Activated naive CD4-positive, alpha-beta T cell treated with anti-CD3 and anti-CD28 coated beads for 36 hours (primary cell): ENCODE measurements at regions of chr2 and their contacts with region 1.

Region 1: GRCh38 chr2:80073134-80073561 is 231.4 kb downstream of the LRRTM1 start:
- DNase-seq: peak; percentile 31
- H3K4me3 Mint-ChIP-seq: no peak overlapping the region
- H3K27ac Mint-ChIP-seq: no peak overlapping the region
- H3K4me1 Mint-ChIP-seq: no peaks in the 10 kb centered on the region
- H3K27me3 Mint-ChIP-seq: peaks cover 7% of the 10 kb centered on the region

Region 2: GRCh38 chr2:79910643-79911042 is 162.5 kb before region 1 on chr2:
- CTCF ChIA-PET with region 1: no interaction called
- intact Hi-C with region 1: no loop called
- DNase-seq: no peak
- H3K4me3 Mint-ChIP-seq: no peak overlapping the region
- H3K27ac Mint-ChIP-seq: no peak overlapping the region
- H3K4me1 Mint-ChIP-seq: no peaks in the 10 kb centered on the region
- H3K27me3 Mint-ChIP-seq: peaks cover 4% of the 10 kb centered on the region

Region 3: DNA sequence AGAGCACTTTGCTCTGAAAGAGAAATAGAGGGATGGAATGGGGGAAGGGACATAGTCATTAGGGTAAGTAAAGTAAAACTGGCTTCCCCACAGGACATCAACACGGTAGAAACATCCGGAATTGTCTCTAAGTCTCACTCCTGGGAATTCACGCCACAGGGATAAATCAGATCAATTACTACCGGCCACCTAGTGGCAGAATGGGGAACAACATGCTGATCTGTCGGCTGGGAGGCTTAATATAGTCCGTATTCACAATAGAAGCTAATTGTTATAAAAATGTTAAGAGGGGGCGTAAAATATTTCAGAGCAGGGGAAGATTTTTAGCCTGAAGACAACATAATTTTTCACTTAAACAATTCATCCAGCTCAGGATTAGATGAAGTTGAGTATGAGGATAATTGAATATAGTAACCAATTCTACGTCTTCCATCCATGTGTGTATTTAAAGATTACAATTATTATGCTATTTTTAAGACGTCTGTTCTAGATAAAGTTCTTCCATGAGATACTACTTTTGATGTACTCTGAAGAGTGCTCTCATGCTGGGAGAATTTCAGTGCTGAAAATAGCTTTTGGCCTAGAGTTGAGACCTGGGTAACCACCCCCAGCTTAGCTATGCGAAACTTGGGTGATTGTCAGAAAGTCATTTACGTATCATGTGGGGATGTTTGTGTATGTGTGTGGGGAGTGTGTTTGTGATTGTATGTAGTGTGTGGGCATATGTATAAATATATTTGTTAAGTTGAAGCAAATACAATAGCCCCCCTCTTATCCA is 165.7 kb after region 1 on chr2:
- CTCF ChIA-PET with region 1: no interaction called
- intact Hi-C with region 1: loop called (anchors 2 kb)
- DNase-seq: peak; percentile 20
- H3K4me3 Mint-ChIP-seq: no peak overlapping the region
- H3K27ac Mint-ChIP-seq: no peak overlapping the region
- H3K4me1 Mint-ChIP-seq: no peaks in the 10 kb centered on the region
- H3K27me3 Mint-ChIP-seq: peaks cover 2% of the 10 kb centered on the region

Region 4: DNA sequence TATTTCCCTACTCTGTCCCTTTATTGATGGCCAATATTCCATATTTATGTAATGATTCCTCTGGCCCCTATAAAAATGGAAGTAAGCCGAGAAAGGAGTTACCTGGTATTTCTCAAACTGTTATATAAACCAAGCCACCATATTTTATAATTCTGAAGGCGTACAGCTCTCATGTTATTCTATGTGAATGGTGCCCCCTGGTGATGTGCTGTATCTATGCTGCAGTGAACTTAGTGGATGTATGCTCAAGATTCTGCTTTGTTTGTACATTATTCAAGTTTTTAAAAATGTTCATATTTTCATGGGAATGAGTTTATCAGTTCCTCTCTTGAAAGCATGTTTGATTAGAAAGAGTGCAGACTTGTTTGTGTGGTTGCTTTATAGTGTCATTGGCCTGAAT is 425.9 kb after region 1 on chr2:
- CTCF ChIA-PET with region 1: no interaction called
- intact Hi-C with region 1: loop called (anchors 2 kb)
- DNase-seq: peak; percentile 5
- H3K4me3 Mint-ChIP-seq: no peak overlapping the region
- H3K27ac Mint-ChIP-seq: no peak overlapping the region
- H3K4me1 Mint-ChIP-seq: no peaks in the 10 kb centered on the region
- H3K27me3 Mint-ChIP-seq: no peaks in the 10 kb centered on the region

Region 5: GRCh38 chr2:81389203-81389602 is 1316.1 kb after region 1 on chr2:
- CTCF ChIA-PET with region 1: no interaction called
- intact Hi-C with region 1: loop called (anchors 2 kb)
- DNase-seq: peak; percentile 6
- H3K4me3 Mint-ChIP-seq: no peak overlapping the region
- H3K27ac Mint-ChIP-seq: no peak overlapping the region
- H3K4me1 Mint-ChIP-seq: no peaks in the 10 kb centered on the region
- H3K27me3 Mint-ChIP-seq: no peaks in the 10 kb centered on the region